ENCODE measurements at regions of chr1 and their contacts with region 1.

Region 1: DNA sequence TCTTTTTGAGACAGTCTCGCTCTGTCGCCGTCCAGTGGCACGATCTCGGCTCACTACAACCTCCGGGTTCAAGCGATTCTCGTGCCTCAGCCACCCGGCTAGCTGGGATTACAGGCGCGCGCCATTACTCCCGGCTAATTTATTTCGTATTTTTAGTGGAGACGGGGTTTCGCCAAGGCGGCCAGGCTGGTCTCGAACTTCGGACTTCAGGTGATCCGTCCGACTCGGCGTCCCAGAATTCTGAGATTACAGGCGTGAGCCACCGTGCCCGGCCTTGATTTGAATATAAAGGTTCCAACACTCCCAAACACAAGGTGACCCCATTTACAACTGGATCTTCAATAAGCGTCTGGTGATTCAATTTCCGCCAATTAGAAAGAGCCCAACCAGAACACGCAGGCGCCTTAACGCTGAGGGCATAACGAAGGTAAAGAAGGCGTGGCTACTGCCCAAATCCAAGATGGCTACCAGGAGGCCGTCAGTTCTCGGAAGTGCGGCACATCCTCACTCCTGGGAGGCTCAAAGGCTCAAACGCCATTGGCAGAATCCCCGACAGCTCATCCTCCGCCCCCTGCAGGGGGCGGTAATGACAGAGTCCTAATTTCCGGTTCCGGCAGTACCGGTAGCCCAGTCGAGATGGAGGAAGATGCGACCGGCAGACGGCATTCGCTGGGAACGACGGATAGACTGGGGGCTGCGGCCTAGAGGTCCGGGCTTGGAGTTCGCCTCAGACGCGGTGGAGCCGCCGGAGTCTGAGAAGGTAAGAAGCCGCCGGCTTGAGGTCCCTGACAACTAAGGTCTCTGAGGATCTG is at the start of gene SLC25A44:
- DNase-seq: peak; percentile 94 to 98 (median 97)
- ATAC-seq: peak; percentile 99
- H3K4me3 ChIP-seq: peak within 1 kb of the TSS; percentile 92
- H3K4me3 Mint-ChIP-seq: peak within 1 kb of the TSS; percentile 83 to 99 (median 97)
- H3K27ac ChIP-seq: peak within 1 kb of the TSS; percentile 86
- H3K27ac Mint-ChIP-seq: peak within 1 kb of the TSS; percentile 85 to 97 (median 93)
- H3K4me1 ChIP-seq: peaks cover 12 to 31% of the 10 kb centered on the region in 2 donors
- H3K4me1 Mint-ChIP-seq: peaks cover 22 to 53% (median 45%) of the 10 kb centered on the region in 7 donors
- H3K27me3 ChIP-seq: no peaks in the 10 kb centered on the region
- H3K27me3 Mint-ChIP-seq: no peaks in the 10 kb centered on the region
- total RNA-seq, gene SLC25A44: 17.8 to 38.4 (median 19.6) TPM

Region 2: GRCh38 chr1:156020292-156021089 is 173.2 kb before region 1 on chr1 and contains the start of gene SSR2:
- CTCF ChIA-PET with region 1: no interaction called
- POLR2A ChIA-PET with region 1: no interaction called
- intact Hi-C with region 1: loop called in 1 of 2 experiments (anchors 1 kb)
- DNase-seq: peak; percentile 44 to 91 (median 84)
- ATAC-seq: peak; percentile 99
- H3K4me3 ChIP-seq: peak within 1 kb of the TSS; percentile 87
- H3K4me3 Mint-ChIP-seq: peak within 1 kb of the TSS; percentile 87 to 99 (median 96)
- H3K27ac ChIP-seq: peak within 1 kb of the TSS; percentile 74
- H3K27ac Mint-ChIP-seq: peak within 1 kb of the TSS; percentile 89 to 99 (median 95)
- H3K4me1 ChIP-seq: peaks cover 4 to 9% of the 10 kb centered on the region in 2 donors
- H3K4me1 Mint-ChIP-seq: peaks cover 20 to 47% (median 41%) of the 10 kb centered on the region in 7 donors
- H3K27me3 ChIP-seq: no peaks in the 10 kb centered on the region
- H3K27me3 Mint-ChIP-seq: peaks cover 0 to 12% (median 0%) of the 10 kb centered on the region in 5 donors
- total RNA-seq, gene SSR2: 207 to 278 (median 256) TPM

Region 3: DNA sequence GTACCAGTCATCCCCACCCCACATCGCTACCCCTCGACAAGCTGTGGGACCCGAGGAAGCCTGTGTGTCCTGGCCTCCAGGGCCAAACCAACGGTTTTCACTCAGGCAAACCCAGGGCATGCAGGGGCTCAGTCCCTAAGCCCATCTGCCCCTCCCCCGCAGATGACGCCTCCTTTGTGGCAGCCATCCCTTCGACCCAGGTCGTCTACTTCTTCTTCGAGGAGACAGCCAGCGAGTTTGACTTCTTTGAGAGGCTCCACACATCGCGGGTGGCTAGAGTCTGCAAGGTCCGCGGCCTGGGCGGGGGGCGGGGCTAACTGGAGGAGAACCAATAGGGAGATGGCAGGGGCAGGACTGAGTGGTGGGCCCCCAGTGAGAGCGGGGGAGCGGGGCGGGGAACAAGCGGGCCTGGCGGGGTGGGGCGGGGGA is 32.9 kb before region 1 on chr1:
- CTCF ChIA-PET with region 1: no interaction called
- POLR2A ChIA-PET with region 1: interaction called, 5 read pairs
- intact Hi-C with region 1: loop called in 1 of 2 experiments (anchors 1 kb)
- DNase-seq: peak in 7 of 9 donors; percentile 14 to 67 (median 33)
- ATAC-seq: peak; percentile 89
- H3K4me3 ChIP-seq: peak overlapping the region; percentile 47
- H3K4me3 Mint-ChIP-seq: peak overlapping the region; percentile 67 to 92 (median 81)
- H3K27ac ChIP-seq: no peak overlapping the region
- H3K27ac Mint-ChIP-seq: peak overlapping the region in 5 of 9 donors; percentile 48 to 81 (median 73)
- H3K4me1 ChIP-seq: peaks cover 5 to 11% of the 10 kb centered on the region in 2 donors
- H3K4me1 Mint-ChIP-seq: peaks cover 4 to 40% (median 20%) of the 10 kb centered on the region in 7 donors
- H3K27me3 ChIP-seq: no peaks in the 10 kb centered on the region
- H3K27me3 Mint-ChIP-seq: no peaks in the 10 kb centered on the region

Region 4: DNA sequence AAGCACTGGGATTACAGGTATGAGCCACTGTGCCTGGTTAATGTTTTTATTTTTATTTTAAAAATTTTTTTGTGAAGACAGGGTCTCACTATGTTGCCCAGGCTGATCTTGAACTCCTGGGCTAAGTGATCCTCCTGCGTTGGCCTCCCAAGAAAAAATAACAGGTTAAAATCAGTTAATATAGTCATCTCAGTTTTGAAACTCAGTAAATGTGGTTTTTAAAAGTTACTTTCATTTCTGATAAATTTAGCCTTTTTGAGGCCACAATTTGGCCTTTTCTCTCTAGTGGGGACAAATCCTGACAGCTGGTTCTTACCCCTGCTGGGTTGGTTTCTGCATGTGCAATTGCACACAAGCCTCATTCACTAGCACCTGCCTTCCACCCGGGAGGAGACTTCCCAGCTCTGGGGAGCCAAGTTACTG is 32.4 kb after region 1 on chr1:
- CTCF ChIA-PET with region 1: interaction called, 5 read pairs
- POLR2A ChIA-PET with region 1: interaction called, 3 read pairs
- intact Hi-C with region 1: loop called (anchors 1 kb)
- DNase-seq: no peak
- ATAC-seq: no peak
- H3K4me3 ChIP-seq: no peak overlapping the region
- H3K4me3 Mint-ChIP-seq: peak overlapping the region in 1 of 10 donors; percentile 11
- H3K27ac ChIP-seq: no peak overlapping the region
- H3K27ac Mint-ChIP-seq: peak overlapping the region in 2 of 9 donors; percentile 67 to 76
- H3K4me1 ChIP-seq: no peaks in the 10 kb centered on the region
- H3K4me1 Mint-ChIP-seq: peaks cover 11 to 44% (median 18%) of the 10 kb centered on the region in 7 donors
- H3K27me3 ChIP-seq: no peaks in the 10 kb centered on the region
- H3K27me3 Mint-ChIP-seq: no peaks in the 10 kb centered on the region

Region 5: GRCh38 chr1:156740679-156741612 is 547.3 kb after region 1 on chr1 and contains the start of gene MRPL24:
- CTCF ChIA-PET with region 1: no interaction called
- POLR2A ChIA-PET with region 1: no interaction called
- intact Hi-C with region 1: loop called in 1 of 2 experiments (anchors 5 kb)
- DNase-seq: peak; percentile 84 to 99 (median 98)
- ATAC-seq: peak; percentile 95
- H3K4me3 ChIP-seq: peak within 1 kb of the TSS; percentile 79
- H3K4me3 Mint-ChIP-seq: peak within 1 kb of the TSS; percentile 94 to 99 (median 98)
- H3K27ac ChIP-seq: peak within 1 kb of the TSS; percentile 90
- H3K27ac Mint-ChIP-seq: peak within 1 kb of the TSS; percentile 86 to 99 (median 98)
- H3K4me1 ChIP-seq: peaks cover 17 to 20% of the 10 kb centered on the region in 2 donors
- H3K4me1 Mint-ChIP-seq: peaks cover 23 to 50% (median 40%) of the 10 kb centered on the region in 7 donors
- H3K27me3 ChIP-seq: no peaks in the 10 kb centered on the region
- H3K27me3 Mint-ChIP-seq: no peaks in the 10 kb centered on the region
- total RNA-seq, gene MRPL24: 19.1 to 68.9 (median 47.2) TPM